AG04449 (cell line): ENCODE measurements at regions of chr1 and their contacts with region 1.

Region 1: GRCh38 chr1:239987103-239987745 is 104.5 kb upstream of the FMN2 start:
- DNase-seq: no peak
- H3K4me3 ChIP-seq: no peak overlapping the region
- CTCF ChIP-seq: peak; percentile 58

Region 2: DNA sequence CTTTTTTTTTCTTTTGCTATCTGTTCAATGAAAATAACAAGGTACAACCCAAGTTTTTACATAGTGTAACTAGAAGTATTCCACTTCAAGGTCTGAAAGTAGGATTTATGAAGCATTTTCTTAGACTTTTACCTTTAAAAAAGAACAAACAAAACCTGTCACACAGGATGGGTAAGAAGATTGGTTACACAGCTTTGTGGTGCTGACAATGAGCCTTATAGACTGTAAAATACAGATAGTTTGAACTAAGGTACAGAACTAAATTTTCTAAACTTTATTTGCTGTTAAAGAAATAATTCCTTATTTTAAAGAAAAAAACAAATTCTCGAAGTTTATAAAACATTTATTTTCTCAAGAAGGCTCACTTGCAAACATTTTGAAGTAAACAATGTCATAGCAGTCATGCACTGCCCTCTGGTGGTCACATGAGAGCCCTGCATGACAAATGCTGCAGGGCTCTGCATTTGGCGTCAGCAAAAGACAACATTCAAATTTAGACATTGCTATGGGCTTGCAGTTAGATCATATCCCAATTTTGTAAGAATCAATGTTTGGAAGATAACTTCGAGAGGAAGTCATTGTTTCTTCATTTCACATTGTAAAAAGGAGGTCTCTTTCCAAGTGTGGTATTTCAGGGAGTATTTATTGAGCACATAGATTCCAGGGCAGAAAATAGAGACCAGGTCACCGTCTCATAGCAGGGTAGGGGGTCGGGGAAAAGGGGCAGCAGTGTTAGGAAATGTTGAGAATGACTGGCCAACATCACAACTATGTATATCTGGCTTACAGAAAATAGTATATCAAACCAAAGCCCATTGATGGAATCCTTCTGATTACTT is 10.9 kb before region 1 on chr1:
- CTCF ChIA-PET with region 1: interaction called, 19 read pairs
- POLR2A ChIA-PET with region 1: no interaction called
- DNase-seq: no peak
- H3K4me3 ChIP-seq: no peak overlapping the region
- CTCF ChIP-seq: peak; percentile 78

Region 3: DNA sequence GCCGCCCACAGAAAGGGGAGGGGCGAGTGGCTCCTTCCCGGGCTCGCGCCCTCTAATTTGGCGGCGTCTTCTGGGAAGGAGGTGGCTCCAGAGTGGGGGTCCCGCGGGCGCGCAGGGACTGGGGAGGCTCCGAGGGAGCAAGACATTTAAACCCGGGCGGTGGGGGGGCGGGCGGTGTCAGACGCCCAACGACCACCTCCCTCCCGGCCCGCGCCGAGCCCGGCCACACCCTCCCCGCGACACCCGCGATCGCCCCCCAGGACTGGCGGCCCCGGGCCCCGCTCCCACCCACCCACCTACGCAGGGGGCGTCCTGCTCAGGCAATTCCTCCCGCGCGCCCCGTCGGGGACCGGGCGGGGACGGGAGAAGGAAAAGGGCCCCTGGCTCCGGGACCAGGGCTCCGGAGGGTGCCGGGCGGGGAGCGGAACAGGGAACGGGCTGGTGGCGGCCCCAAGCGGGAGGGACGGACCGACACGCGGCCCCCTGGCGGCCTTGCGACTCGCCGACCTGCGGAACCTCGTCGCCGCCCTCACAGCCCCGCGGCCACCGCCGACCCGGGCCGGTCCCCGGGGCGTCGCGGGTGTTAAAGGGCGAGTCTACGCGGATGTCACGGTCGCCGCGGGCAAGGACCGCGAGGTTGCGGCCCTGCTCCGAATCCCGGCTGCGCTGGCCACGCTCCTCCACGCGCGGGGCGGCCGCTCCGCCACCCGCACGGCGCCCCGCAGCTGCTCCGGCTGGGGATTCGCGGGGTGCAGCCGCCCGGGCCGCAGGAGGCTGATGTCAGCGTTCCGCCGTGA is 10.5 kb after region 1 on chr1:
- CTCF ChIA-PET with region 1: interaction called, 12 read pairs
- POLR2A ChIA-PET with region 1: no interaction called
- DNase-seq: no peak
- H3K4me3 ChIP-seq: peak overlapping the region; percentile 37; the same call in 1 of the 2 replicates
- CTCF ChIP-seq: peak; percentile 44

Region 4: GRCh38 chr1:240399381-240399780 is 412.2 kb after region 1 on chr1:
- CTCF ChIA-PET with region 1: no interaction called
- POLR2A ChIA-PET with region 1: no interaction called
- DNase-seq: peak; percentile 86
- H3K4me3 ChIP-seq: no peak overlapping the region
- CTCF ChIP-seq: no peak